ENCODE measurements at regions of chr4 and their contacts with region 1.

Region 1: GRCh38 chr4:163587867-163588266 is 93.4 kb downstream of the TMA16 start:
- DNase-seq: peak; percentile 34
- ATAC-seq: peak; percentile 77
- H3K4me3 Mint-ChIP-seq: peak overlapping the region; percentile 65
- H3K27ac Mint-ChIP-seq: peak overlapping the region; percentile 92
- H3K4me1 Mint-ChIP-seq: peaks cover 79% of the 10 kb centered on the region
- H3K27me3 Mint-ChIP-seq: no peaks in the 10 kb centered on the region
- CTCF ChIP-seq: no peak

Region 2: GRCh38 chr4:163568843-163569242 is 19.0 kb before region 1 on chr4:
- CTCF ChIA-PET with region 1: interaction called, 3 read pairs
- POLR2A ChIA-PET with region 1: interaction called, 12 read pairs
- intact Hi-C with region 1: loop called (anchors 1 kb)
- DNase-seq: no peak
- ATAC-seq: peak; percentile 91
- H3K4me3 Mint-ChIP-seq: peak overlapping the region; percentile 54
- H3K27ac Mint-ChIP-seq: peak overlapping the region; percentile 80
- H3K4me1 Mint-ChIP-seq: peaks cover 82% of the 10 kb centered on the region
- H3K27me3 Mint-ChIP-seq: no peaks in the 10 kb centered on the region
- CTCF ChIP-seq: no peak

Region 3: DNA sequence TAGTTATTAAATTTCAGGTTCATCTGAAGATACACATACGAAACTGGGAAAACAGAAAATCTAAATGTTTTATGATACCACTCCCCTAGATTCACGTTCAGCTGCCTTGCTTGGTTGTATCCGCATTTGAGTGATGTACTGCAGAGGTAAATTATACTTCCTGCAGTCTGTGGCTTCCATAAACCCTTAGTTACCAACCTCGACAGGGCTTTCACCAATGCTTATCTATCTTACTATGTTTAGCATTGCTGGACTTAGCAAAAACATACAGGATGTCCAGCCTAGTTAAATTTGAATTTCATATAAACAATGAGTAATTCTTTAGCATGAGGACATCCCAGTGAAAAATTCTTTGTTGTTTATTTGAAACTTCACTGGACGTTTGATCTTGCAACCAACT is 15.4 kb after region 1 on chr4:
- CTCF ChIA-PET with region 1: interaction called, 10 read pairs
- POLR2A ChIA-PET with region 1: interaction called, 129 read pairs
- intact Hi-C with region 1: loop called (anchors 1 kb)
- DNase-seq: no peak
- ATAC-seq: peak; percentile 18
- H3K4me3 Mint-ChIP-seq: peak overlapping the region; percentile 84
- H3K27ac Mint-ChIP-seq: peak overlapping the region; percentile 98
- H3K4me1 Mint-ChIP-seq: peaks cover 90% of the 10 kb centered on the region
- H3K27me3 Mint-ChIP-seq: no peaks in the 10 kb centered on the region
- CTCF ChIP-seq: no peak

Region 4: GRCh38 chr4:163681208-163681821 is 93.4 kb after region 1 on chr4:
- CTCF ChIA-PET with region 1: interaction called, 56 read pairs
- POLR2A ChIA-PET with region 1: interaction called, 4 read pairs
- intact Hi-C with region 1: loop called (anchors 1 kb)
- DNase-seq: no peak
- ATAC-seq: peak; percentile 81
- H3K4me3 Mint-ChIP-seq: no peak overlapping the region
- H3K27ac Mint-ChIP-seq: peak overlapping the region; percentile 25
- H3K4me1 Mint-ChIP-seq: peaks cover 19% of the 10 kb centered on the region
- H3K27me3 Mint-ChIP-seq: peaks cover 3% of the 10 kb centered on the region
- CTCF ChIP-seq: no peak